Dendritic cell treated with granulocyte-macrophage colony-stimulating factor and Interleukin-4, amounts not matched to agents 40 ng/mL and 50 ng/mL, for 4 days (primary cell): ENCODE measurements at regions of chr4 and their contacts with region 1.

Region 1: GRCh38 chr4:100742045-100742444 is 224.2 kb upstream of the EMCN start:
- H3K4me3 Mint-ChIP-seq: no peak overlapping the region
- H3K27ac Mint-ChIP-seq: no peak overlapping the region
- H3K4me1 Mint-ChIP-seq: no peaks in the 10 kb centered on the region
- H3K27me3 Mint-ChIP-seq: no peaks in the 10 kb centered on the region

Region 2: GRCh38 chr4:100093091-100093866 is 648.8 kb before region 1 on chr4:
- intact Hi-C with region 1: loop called (anchors 5 kb)
- H3K4me3 Mint-ChIP-seq: no peak overlapping the region
- H3K27ac Mint-ChIP-seq: no peak overlapping the region
- H3K4me1 Mint-ChIP-seq: peaks cover 6% of the 10 kb centered on the region
- H3K27me3 Mint-ChIP-seq: peaks cover 1% of the 10 kb centered on the region

Region 3: DNA sequence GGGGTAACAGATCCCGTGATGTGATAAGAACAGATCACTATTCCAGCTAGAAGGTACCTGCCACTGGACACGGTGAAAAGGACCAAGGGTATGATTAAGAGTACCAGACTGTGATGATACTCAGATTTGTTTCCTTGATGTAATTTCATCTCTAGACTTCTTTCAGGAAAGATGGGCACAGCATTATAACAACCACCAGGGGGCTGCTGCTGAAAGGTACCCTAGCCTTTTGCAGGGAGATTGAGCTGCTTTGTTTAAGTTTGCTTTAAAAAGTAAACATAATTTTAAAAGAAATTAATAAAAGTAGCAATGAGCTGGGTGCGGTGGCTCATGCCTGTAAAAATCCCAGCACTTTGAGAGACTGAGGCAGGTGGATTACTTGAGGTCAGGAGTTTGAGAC is 369.6 kb before region 1 on chr4:
- intact Hi-C with region 1: loop called (anchors 5 kb)
- H3K4me3 Mint-ChIP-seq: no peak overlapping the region
- H3K27ac Mint-ChIP-seq: no peak overlapping the region
- H3K4me1 Mint-ChIP-seq: no peaks in the 10 kb centered on the region
- H3K27me3 Mint-ChIP-seq: no peaks in the 10 kb centered on the region

Region 4: DNA sequence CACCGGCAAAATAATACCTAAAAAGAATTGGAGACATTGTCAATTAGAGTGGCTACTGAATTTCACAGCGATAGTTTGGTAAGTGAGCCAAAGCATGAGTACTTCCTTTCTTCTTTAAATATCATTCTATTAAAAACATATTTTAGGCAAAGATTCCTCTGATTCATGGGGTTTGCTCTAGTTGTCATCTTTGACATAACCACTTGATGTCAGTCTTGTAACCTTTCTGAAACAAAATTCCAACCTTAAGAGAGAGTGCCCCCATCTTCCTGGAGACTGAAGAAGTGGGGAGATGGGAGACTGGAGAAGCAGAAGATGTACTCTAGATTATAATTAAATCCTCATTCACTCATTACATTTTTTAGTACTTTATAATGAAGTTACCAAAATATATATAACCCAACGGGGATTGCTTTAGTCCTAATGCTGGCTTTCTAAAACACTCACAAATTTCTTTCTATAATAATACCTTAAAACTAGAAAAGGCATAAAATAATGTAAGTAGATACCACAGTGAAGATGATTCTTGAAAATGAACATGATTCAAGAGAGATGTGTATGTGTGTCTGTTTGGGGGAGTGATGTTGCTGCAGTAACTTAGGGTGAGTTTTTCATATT is 320.6 kb before region 1 on chr4:
- intact Hi-C with region 1: loop called (anchors 5 kb)
- H3K4me3 Mint-ChIP-seq: no peak overlapping the region
- H3K27ac Mint-ChIP-seq: no peak overlapping the region
- H3K4me1 Mint-ChIP-seq: no peaks in the 10 kb centered on the region
- H3K27me3 Mint-ChIP-seq: no peaks in the 10 kb centered on the region